Kidney (tissue), 22 donors: ENCODE measurements at regions of chr11 and their contacts with region 1.

Region 1: GRCh38 chr11:62787005-62787759 is at the start of gene TMEM179B:
- DNase-seq: peak; percentile 98 to 99 (median 99)
- H3K4me3 ChIP-seq: peak within 1 kb of the TSS; percentile 94 to 100 (median 99)
- H3K27ac ChIP-seq: peak within 1 kb of the TSS; percentile 92 to 93
- H3K4me1 ChIP-seq: peaks cover 4 to 22% (median 19%) of the 10 kb centered on the region in 3 donors
- H3K27me3 ChIP-seq: no peaks in the 10 kb centered on the region
- CTCF ChIP-seq: peak; percentile 47
- total RNA-seq, gene TMEM179B: 57.1 TPM

Region 2: DNA sequence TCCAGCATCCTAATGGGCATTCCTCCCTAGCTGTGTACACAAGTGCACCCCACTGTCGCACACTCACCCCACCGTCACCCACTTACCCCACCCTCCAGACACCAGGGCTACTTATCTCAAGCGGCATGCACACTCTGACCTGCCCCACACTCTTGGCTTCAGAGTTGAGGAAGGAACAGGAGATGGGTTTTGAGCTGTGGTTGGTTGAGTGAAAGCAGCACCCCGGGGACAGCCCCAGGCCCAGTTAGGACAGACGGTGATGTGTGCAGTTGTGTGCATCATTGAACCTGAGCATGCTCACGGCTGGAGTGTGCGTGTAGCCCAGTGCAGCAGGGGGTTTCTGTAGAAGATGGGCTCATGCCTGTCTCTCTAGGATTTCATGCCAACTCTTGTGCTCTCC is 273.0 kb before region 1 on chr11:
- intact Hi-C with region 1: no loop called
- DNase-seq: no peak
- H3K4me3 ChIP-seq: no peak overlapping the region
- H3K27ac ChIP-seq: no peak overlapping the region
- H3K4me1 ChIP-seq: peaks cover 0 to 2% (median under 1%) of the 10 kb centered on the region in 3 donors
- H3K27me3 ChIP-seq: no peaks in the 10 kb centered on the region
- CTCF ChIP-seq: no peak

Region 3: GRCh38 chr11:62860835-62861563 is 73.8 kb after region 1 on chr11:
- intact Hi-C with region 1: loop called (anchors 10 kb)
- DNase-seq: peak in 1 of 5 donors; percentile 28
- H3K4me3 ChIP-seq: no peak overlapping the region
- H3K27ac ChIP-seq: no peak overlapping the region
- H3K4me1 ChIP-seq: peaks cover 0 to 6% (median 3%) of the 10 kb centered on the region in 3 donors
- H3K27me3 ChIP-seq: no peaks in the 10 kb centered on the region
- CTCF ChIP-seq: no peak

Region 4: GRCh38 chr11:62931499-62932278 is 144.5 kb after region 1 on chr11:
- intact Hi-C with region 1: no loop called
- DNase-seq: no peak
- H3K4me3 ChIP-seq: no peak overlapping the region
- H3K27ac ChIP-seq: no peak overlapping the region
- H3K4me1 ChIP-seq: no peaks in the 10 kb centered on the region
- H3K27me3 ChIP-seq: peaks cover 8% of the 10 kb centered on the region
- CTCF ChIP-seq: no peak